Cardiac septum (tissue), 1 donor: ENCODE measurements at regions of chr1 and their contacts with region 1.

Region 1: DNA sequence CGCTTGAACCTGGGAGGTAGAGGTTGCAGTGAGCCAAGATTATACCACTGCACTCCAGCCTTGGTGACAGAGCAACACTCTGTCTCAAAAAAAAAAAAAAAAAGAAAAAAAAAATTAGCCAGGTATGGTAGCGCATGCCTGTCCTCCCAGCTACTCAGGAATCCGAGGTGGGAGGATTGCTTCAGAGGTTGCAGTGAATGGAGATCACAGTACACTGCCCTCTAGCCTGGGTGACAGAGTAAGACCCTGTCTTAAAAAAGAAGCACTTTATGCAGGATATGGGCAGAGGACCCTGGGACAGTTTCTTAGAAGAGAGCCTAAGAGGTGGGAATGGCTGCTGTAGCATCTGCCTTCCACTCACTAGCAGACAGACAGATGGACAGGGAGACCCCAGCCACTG is 23.0 kb downstream of the IQGAP3 start:
- DNase-seq: no peak

Region 2: DNA sequence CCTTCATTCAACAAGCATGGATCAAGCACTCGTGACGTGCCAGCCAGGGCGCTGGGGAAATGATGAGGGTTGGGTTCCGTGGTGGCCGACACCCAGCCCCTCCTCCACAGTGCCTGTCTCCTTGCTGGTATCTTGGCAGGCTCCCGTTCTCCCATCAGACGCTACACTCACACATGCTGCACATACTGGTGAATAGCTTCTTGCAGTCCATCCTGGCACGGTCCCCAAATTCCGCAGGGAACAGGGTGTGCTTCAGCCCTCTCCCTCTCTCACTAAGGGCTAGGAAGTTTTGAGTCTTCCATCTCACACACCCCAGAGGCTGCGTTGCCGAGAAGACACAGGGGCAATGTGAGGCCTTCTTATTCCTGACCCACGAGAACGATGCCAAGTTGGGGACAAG is 38.7 kb before region 1 on chr1:
- intact Hi-C with region 1: loop called (anchors 5 kb)
- DNase-seq: peak; percentile 86

Region 3: GRCh38 chr1:156560585-156561183 is 11.3 kb after region 1 on chr1:
- intact Hi-C with region 1: no loop called
- DNase-seq: peak; percentile 31